PC-3 (cell line): ENCODE measurements at regions of chr5 and their contacts with region 1.

Region 1: DNA sequence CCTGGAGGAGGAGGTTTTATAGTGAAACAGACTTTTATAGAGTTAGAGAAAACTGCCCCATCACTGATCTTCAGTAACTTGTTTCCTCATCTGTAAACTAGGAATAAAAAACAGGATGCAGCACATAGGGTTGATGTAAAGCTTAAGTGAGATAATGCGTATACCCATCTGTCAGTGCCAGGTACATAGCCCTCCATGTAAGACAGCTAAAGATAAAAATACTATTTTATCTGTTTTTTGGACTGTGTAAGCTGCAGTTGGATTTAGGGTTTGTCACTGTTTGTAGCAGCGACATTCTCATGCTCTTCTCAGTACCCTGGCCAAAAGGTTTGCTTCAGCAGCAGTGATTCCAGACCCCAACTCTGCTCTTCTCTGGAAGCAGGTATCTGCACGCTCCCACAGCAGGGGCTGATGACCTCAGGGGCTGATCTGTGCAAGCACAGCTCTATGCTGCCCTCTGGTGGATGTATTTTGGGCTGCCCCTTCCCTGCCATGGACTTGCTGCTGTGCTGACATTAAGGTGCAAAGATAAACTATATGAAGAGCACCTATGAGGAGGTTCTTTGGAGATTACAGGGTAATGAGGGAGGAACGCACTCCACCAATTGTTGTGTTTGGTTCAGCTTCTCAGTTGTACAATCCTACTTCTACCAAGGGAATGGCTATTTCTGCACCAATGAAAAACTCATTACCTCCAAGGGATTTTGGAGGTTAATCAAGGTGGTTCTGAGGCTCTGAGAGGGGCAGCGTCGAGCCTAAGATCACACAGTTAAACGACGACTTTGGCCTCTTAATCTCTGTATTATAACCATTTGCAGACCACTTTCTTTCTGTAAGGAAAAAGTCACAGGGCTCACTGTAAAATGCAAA is 13.1 kb downstream of the HMHB1 start:
- DNase-seq: peak; percentile 83
- ATAC-seq: peak; percentile 68
- H3K4me3 ChIP-seq: no peak overlapping the region
- H3K27ac ChIP-seq: no peak overlapping the region
- H3K4me1 ChIP-seq: peaks cover 18% of the 10 kb centered on the region
- H3K27me3 ChIP-seq: no peaks in the 10 kb centered on the region
- CTCF ChIP-seq: peak; percentile 87

Region 2: GRCh38 chr5:143002459-143003328 is 822.4 kb before region 1 on chr5:
- CTCF ChIA-PET with region 1: no interaction called
- POLR2A ChIA-PET with region 1: no interaction called
- intact Hi-C with region 1: loop called (anchors 10 kb)
- DNase-seq: peak; percentile 47
- ATAC-seq: peak; percentile 48
- H3K4me3 ChIP-seq: no peak overlapping the region
- H3K27ac ChIP-seq: 0 out of 2 replicates have a peak overlapping the region, but pooled peaks have one; percentile 25
- H3K4me1 ChIP-seq: peaks cover 14% of the 10 kb centered on the region
- H3K27me3 ChIP-seq: no peaks in the 10 kb centered on the region
- CTCF ChIP-seq: peak; percentile 60

Region 3: DNA sequence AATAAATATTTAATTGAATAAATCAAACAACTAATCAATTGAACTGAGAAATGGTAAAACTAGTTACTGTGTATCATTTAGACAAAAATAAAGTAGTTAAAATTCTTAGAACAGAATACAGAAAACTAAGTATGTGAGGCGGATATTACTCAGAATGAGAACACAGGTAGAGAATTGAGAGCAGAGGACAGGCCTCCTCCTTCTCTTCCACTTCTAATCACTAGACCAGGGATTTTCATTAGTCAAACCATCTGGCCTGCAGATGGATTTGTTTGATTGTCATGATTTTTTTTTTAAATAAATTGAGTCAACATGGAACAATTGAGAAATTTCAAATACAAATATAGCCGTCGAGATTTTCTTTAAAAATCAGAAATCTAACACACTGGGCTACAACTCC is 211.8 kb before region 1 on chr5:
- CTCF ChIA-PET with region 1: no interaction called
- POLR2A ChIA-PET with region 1: no interaction called
- intact Hi-C with region 1: no loop called
- DNase-seq: peak; percentile 4
- ATAC-seq: no peak; the same call in 1 of the 2 replicates
- H3K4me3 ChIP-seq: no peak overlapping the region
- H3K27ac ChIP-seq: no peak overlapping the region
- H3K4me1 ChIP-seq: no peaks in the 10 kb centered on the region
- H3K27me3 ChIP-seq: no peaks in the 10 kb centered on the region
- CTCF ChIP-seq: no peak

Region 4: DNA sequence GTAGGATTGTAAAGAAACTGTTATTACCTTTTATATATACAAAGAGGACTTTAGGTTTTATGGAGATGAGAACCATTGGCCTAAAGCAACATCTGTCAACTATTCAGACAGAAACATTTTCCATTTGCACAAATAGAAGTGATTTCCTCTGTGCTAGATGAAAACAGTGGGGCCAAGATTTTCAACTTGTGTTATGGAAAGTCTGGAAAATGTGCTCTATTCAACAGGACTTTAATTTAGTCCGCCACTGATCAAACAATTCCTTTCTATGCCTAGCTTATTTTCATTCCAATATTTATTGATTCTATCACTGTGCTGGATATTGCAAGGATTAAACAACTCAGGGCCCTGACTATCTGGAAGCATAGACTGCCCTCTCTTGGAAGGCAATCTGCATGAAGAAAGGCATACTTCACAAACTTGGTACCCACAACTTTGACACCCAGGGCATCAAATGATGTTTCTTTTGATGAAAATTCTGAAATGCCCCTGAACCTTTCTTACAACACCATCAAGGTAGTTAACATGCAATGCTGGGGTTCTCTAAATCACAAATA is 139.8 kb before region 1 on chr5:
- CTCF ChIA-PET with region 1: no interaction called
- POLR2A ChIA-PET with region 1: no interaction called
- intact Hi-C with region 1: loop called (anchors 10 kb)
- DNase-seq: peak; percentile 25
- ATAC-seq: no peak; the same call in 1 of the 2 replicates
- H3K4me3 ChIP-seq: no peak overlapping the region
- H3K27ac ChIP-seq: no peak overlapping the region
- H3K4me1 ChIP-seq: peaks cover 14% of the 10 kb centered on the region
- H3K27me3 ChIP-seq: no peaks in the 10 kb centered on the region
- CTCF ChIP-seq: peak; percentile 58

Region 5: DNA sequence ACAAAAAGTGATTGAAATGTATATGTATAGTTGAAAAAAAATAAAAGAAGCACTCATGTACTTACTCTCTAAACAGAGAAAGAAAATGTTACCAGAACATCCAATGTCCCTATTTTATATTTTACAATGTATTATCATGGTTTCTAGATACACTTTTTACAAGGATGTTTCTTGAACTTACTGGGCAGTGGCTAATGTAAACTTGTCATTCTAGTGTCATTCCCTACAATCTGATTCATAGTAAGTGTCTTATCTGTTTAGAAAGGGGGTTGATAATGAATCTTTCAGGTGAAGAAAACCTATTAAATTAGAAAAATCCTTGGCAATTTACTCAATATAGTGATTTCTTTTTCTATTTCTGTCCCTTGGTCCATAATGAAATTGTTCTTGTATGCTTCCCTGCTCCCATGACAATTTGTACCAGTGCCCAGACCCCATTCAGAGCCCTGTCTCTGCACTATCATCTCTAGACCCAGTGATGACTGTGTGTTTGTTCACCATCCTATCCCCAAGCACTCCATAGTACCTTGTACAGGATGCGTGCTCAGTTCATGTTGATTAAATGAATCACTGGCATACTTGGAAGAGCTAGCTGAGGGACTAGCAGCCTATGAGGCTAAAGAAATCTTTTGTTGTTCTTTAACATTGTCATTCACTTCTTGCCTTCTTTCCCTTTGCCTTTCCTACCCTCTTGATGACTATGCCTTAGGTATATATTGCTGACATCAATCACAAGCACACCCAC is 88.1 kb after region 1 on chr5:
- CTCF ChIA-PET with region 1: no interaction called
- POLR2A ChIA-PET with region 1: no interaction called
- intact Hi-C with region 1: loop called (anchors 1 kb)
- DNase-seq: peak; percentile 94
- ATAC-seq: peak; percentile 99
- H3K4me3 ChIP-seq: no peak overlapping the region
- H3K27ac ChIP-seq: peak overlapping the region; percentile 97
- H3K4me1 ChIP-seq: peaks cover 31% of the 10 kb centered on the region
- H3K27me3 ChIP-seq: no peaks in the 10 kb centered on the region
- CTCF ChIP-seq: no peak

Region 6: GRCh38 chr5:143968011-143968878 is 143.2 kb after region 1 on chr5:
- CTCF ChIA-PET with region 1: interaction called, 6 read pairs
- POLR2A ChIA-PET with region 1: no interaction called
- intact Hi-C with region 1: loop called (anchors 1 kb)
- DNase-seq: peak; percentile 77
- ATAC-seq: peak; percentile 47
- H3K4me3 ChIP-seq: no peak overlapping the region
- H3K27ac ChIP-seq: peak overlapping the region; percentile 51
- H3K4me1 ChIP-seq: peaks cover 37% of the 10 kb centered on the region
- H3K27me3 ChIP-seq: no peaks in the 10 kb centered on the region
- CTCF ChIP-seq: peak; percentile 74

Region 7: GRCh38 chr5:144142139-144142823 is 317.2 kb after region 1 on chr5:
- CTCF ChIA-PET with region 1: no interaction called
- POLR2A ChIA-PET with region 1: no interaction called
- intact Hi-C with region 1: loop called (anchors 1 kb)
- DNase-seq: peak; percentile 55
- ATAC-seq: peak; percentile 91
- H3K4me3 ChIP-seq: no peak overlapping the region
- H3K27ac ChIP-seq: no peak overlapping the region
- H3K4me1 ChIP-seq: peaks cover 7% of the 10 kb centered on the region; the same call in 1 of the 2 replicates
- H3K27me3 ChIP-seq: no peaks in the 10 kb centered on the region
- CTCF ChIP-seq: peak; percentile 81